BJ (cell line): ENCODE measurements at regions of chr2 and their contacts with region 1.

Region 1: GRCh38 chr2:95022309-95023221 is 2.9 kb upstream of the MAL start:
- DNase-seq: no peak
- H3K4me3 ChIP-seq: no peak overlapping the region
- H3K27me3 ChIP-seq: peaks cover 25% of the 10 kb centered on the region
- CTCF ChIP-seq: peak; percentile 90

Region 2: DNA sequence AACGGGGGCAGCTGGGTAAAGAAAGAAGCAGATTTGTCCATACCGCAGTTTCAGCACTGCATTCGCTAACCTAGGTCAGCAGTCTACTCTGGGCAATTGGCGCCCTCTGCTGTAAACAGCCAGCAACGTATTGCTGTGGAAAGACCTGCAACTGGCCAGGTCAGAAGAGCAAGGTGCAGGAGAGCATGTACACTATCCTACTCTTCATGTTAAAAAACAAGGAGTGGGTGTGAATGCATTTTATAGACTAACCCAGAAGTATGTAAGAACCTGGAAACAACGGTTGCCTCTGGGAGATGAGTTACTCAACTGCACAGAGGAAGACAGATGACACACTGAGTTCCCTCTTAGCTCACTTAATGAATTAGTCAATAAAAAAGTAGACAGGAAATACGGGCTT is 92.9 kb after region 1 on chr2:
- CTCF ChIA-PET with region 1: interaction called, 18 read pairs
- POLR2A ChIA-PET with region 1: no interaction called
- DNase-seq: peak; percentile 7
- H3K4me3 ChIP-seq: no peak overlapping the region
- H3K27me3 ChIP-seq: no peaks in the 10 kb centered on the region
- CTCF ChIP-seq: peak; percentile 86